Activated naive CD4-positive, alpha-beta T cell treated with anti-CD3 and anti-CD28 coated beads for 36 hours (primary cell): ENCODE measurements at regions of chr21 and their contacts with region 1.

Region 1: GRCh38 chr21:42107881-42108553 is 36.9 kb downstream of the UMODL1 start:
- DNase-seq: peak; percentile 71
- H3K4me3 Mint-ChIP-seq: peak overlapping the region; percentile 20
- H3K27ac Mint-ChIP-seq: no peak overlapping the region
- H3K4me1 Mint-ChIP-seq: peaks cover 5% of the 10 kb centered on the region
- H3K27me3 Mint-ChIP-seq: no peaks in the 10 kb centered on the region

Region 2: GRCh38 chr21:41612674-41613532 is 495.1 kb before region 1 on chr21:
- CTCF ChIA-PET with region 1: interaction called, 5 read pairs
- intact Hi-C with region 1: loop called (anchors 2 kb)
- DNase-seq: peak; percentile 35
- H3K4me3 Mint-ChIP-seq: no peak overlapping the region
- H3K27ac Mint-ChIP-seq: no peak overlapping the region
- H3K4me1 Mint-ChIP-seq: no peaks in the 10 kb centered on the region
- H3K27me3 Mint-ChIP-seq: peaks cover 25% of the 10 kb centered on the region

Region 3: GRCh38 chr21:41879190-41879998 is 228.6 kb before region 1 on chr21 and contains the start of gene PRDM15:
- CTCF ChIA-PET with region 1: interaction called, 7 read pairs
- intact Hi-C with region 1: loop called (anchors 5 kb)
- DNase-seq: peak; percentile 86
- H3K4me3 Mint-ChIP-seq: peak within 1 kb of the TSS; percentile 84
- H3K27ac Mint-ChIP-seq: peak within 1 kb of the TSS; percentile 91
- H3K4me1 Mint-ChIP-seq: peaks cover 15% of the 10 kb centered on the region
- H3K27me3 Mint-ChIP-seq: no peaks in the 10 kb centered on the region
- total RNA-seq, gene PRDM15: 9.6 to 9.8 TPM

Region 4: DNA sequence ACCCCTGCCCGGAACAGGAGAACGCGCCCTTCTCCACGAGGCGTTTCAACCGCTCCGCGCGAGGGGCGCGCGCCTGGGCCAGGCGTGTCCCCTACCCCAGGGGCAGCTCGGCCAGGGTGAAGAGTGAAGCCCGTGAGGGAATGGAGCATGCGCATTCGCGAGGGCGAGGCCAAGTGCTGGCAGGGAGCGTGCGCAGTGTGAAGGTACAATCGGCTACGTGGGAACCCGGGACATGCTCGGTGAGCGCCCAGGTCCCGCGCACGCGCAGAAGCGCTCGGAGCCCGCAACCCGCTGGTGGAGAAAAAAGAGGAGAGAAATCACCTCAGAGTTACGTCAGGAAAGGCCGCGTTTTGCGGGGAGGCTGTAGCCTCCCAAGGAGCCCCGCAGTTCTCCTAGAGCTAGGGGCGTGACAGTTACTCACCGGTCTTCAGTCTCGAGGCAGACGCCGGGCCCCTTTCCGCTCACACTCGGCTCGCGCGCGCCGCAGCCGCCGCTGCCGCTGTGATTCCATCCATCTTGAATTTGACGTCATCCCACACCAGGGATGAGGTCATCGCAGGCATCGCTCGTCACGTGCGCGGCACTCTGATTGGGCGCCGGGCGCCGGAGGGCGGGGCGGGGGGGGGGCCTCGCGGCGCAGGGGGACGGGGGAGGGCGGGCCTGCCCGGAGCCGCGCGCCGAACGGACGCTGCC is 98.0 kb before region 1 on chr21 and contains the start of gene ZBTB21:
- CTCF ChIA-PET with region 1: interaction called, 7 read pairs
- intact Hi-C with region 1: loop called (anchors 5 kb)
- DNase-seq: peak; percentile 98
- H3K4me3 Mint-ChIP-seq: peak within 1 kb of the TSS; percentile 98
- H3K27ac Mint-ChIP-seq: peak within 1 kb of the TSS; percentile 99
- H3K4me1 Mint-ChIP-seq: peaks cover 32% of the 10 kb centered on the region
- H3K27me3 Mint-ChIP-seq: no peaks in the 10 kb centered on the region
- total RNA-seq, gene ZBTB21: 27.8 to 28.0 TPM

Region 5: DNA sequence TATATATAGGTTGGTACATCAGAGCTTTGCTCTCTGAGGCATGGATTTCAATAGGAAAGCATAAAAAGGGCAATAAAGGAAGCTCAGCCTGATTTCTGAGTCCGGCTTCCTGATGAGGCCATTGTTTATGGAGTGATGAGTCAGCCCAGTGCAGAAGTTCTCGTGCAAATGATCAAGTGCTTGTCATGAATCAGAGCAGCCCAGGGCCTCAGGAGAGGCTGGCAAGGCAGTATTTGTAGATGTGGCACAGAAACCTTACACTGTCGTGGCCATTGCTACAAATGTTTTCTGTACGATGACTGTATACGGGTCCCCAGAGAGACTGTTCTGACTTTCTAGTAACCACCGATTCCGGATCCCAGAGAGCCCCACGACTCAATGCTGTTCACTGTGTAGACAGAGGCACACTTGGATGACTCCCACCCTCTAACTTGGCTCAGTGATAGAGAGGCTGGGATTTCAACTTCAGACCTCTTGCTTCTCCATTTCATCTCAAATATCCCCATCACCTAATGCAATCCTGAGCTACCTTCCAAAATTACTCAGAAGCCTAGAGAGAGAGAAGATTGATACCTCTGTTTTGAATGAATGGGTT is 10.1 kb before region 1 on chr21:
- CTCF ChIA-PET with region 1: interaction called, 43 read pairs
- intact Hi-C with region 1: no loop called
- DNase-seq: no peak
- H3K4me3 Mint-ChIP-seq: no peak overlapping the region
- H3K27ac Mint-ChIP-seq: no peak overlapping the region
- H3K4me1 Mint-ChIP-seq: peaks cover 3% of the 10 kb centered on the region
- H3K27me3 Mint-ChIP-seq: no peaks in the 10 kb centered on the region